ENCODE measurements at regions of chr2 and their contacts with region 1.

Region 1: GRCh38 chr2:112626604-112627059 is 19.1 kb upstream of the SLC20A1 start:
- DNase-seq: peak; percentile 89
- H3K4me3 Mint-ChIP-seq: peak overlapping the region; percentile 56
- H3K27ac Mint-ChIP-seq: peak overlapping the region; percentile 90
- H3K4me1 Mint-ChIP-seq: peaks cover 74% of the 10 kb centered on the region
- H3K27me3 Mint-ChIP-seq: no peaks in the 10 kb centered on the region

Region 2: GRCh38 chr2:112584134-112584890 is 42.3 kb before region 1 on chr2 and contains the start of gene CHCHD5:
- intact Hi-C with region 1: loop called (anchors 1 kb)
- DNase-seq: peak; percentile 98
- H3K4me3 Mint-ChIP-seq: peak within 1 kb of the TSS; percentile 93
- H3K27ac Mint-ChIP-seq: peak within 1 kb of the TSS; percentile 99
- H3K4me1 Mint-ChIP-seq: peaks cover 33% of the 10 kb centered on the region
- H3K27me3 Mint-ChIP-seq: no peaks in the 10 kb centered on the region
- total RNA-seq, gene CHCHD5: 36.4 and 37.6 TPM in 2 replicates

Region 3: DNA sequence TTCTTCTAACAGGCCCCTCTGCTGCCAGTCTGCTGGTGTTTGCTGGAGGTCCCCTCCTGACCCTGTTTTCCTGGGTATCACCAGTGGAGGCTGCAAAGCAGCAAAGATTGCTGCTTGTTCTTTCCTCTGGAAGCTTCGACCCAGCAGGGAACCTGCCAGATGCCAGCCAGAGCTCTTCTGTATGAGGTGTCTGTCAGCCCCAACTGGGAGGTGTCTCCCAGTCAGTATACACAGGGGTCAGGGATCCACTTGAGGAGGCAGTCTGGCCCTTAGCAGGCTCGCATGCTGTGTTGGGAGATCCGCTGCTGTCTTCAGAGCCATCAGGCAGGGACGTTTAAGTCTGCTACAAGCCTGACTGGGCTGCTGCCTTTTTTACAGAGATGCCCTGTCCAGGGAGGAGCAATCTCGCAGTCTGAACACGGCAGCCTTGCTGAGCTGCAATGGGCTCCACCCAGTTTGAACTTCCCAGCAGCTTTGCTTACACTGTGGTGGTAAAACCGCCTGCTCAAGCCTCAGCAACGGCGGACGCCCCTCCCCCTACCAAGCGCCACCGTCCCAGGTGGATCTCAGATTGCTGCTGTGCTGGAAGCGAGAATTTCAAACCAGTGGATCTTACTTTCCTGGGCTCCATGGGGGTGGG is 12.3 kb before region 1 on chr2:
- intact Hi-C with region 1: no loop called
- DNase-seq: no peak
- H3K4me3 Mint-ChIP-seq: no peak overlapping the region
- H3K27ac Mint-ChIP-seq: no peak overlapping the region
- H3K4me1 Mint-ChIP-seq: peaks cover 1% of the 10 kb centered on the region
- H3K27me3 Mint-ChIP-seq: peaks cover 34% of the 10 kb centered on the region

Region 4: DNA sequence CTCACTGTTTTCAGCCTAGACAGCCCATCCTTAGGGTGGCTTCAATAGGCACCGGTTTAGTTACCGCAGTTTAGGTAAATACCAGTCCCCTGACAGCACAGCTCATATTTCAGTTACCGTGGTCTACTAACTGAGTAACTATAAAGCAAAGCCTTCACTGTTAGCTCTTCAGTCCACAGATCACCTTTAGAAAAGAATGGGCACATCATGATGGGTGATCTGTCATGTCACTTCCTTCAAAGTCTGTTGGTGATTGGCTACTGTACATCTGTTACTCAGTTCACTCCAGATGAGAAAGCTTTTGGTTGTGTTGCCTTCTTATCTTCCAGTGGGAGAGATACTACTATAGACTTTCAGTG is 40.1 kb after region 1 on chr2:
- intact Hi-C with region 1: loop called (anchors 5 kb)
- DNase-seq: no peak
- H3K4me3 Mint-ChIP-seq: no peak overlapping the region
- H3K27ac Mint-ChIP-seq: peak overlapping the region; percentile 60
- H3K4me1 Mint-ChIP-seq: peaks cover 2% of the 10 kb centered on the region
- H3K27me3 Mint-ChIP-seq: no peaks in the 10 kb centered on the region

Region 5: GRCh38 chr2:112685271-112685884 is 58.7 kb after region 1 on chr2:
- intact Hi-C with region 1: no loop called
- DNase-seq: no peak
- H3K4me3 Mint-ChIP-seq: no peak overlapping the region
- H3K27ac Mint-ChIP-seq: no peak overlapping the region
- H3K4me1 Mint-ChIP-seq: peaks cover 19% of the 10 kb centered on the region
- H3K27me3 Mint-ChIP-seq: no peaks in the 10 kb centered on the region

Region 6: DNA sequence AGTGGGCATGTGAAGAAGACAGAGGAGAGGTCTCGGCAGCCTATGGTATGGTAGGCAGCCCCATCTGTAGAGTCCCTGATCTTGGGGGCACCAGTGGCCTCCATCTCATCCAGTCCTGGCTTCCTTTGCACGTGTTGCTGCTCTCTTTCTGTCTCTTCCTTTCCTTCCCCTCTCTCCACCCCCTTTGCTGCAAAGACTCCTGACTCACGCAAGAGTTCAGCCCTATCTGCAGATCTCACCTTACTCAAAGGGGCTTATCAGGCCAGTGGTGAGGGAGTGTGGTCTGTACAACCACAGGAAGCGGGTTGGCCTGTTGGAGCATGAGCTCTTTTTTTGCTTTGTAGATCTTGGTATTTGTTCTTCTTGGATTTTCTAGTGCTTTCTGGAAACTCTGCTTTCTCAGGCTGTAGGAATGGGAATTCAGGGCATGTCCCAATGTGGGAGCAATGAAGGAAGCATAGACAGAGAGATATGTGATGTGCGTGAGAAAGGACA is 79.6 kb after region 1 on chr2:
- intact Hi-C with region 1: loop called (anchors 2 kb)
- DNase-seq: peak; percentile 94
- H3K4me3 Mint-ChIP-seq: peak overlapping the region; percentile 74
- H3K27ac Mint-ChIP-seq: peak overlapping the region; percentile 69
- H3K4me1 Mint-ChIP-seq: peaks cover 45% of the 10 kb centered on the region
- H3K27me3 Mint-ChIP-seq: no peaks in the 10 kb centered on the region

Region 7: DNA sequence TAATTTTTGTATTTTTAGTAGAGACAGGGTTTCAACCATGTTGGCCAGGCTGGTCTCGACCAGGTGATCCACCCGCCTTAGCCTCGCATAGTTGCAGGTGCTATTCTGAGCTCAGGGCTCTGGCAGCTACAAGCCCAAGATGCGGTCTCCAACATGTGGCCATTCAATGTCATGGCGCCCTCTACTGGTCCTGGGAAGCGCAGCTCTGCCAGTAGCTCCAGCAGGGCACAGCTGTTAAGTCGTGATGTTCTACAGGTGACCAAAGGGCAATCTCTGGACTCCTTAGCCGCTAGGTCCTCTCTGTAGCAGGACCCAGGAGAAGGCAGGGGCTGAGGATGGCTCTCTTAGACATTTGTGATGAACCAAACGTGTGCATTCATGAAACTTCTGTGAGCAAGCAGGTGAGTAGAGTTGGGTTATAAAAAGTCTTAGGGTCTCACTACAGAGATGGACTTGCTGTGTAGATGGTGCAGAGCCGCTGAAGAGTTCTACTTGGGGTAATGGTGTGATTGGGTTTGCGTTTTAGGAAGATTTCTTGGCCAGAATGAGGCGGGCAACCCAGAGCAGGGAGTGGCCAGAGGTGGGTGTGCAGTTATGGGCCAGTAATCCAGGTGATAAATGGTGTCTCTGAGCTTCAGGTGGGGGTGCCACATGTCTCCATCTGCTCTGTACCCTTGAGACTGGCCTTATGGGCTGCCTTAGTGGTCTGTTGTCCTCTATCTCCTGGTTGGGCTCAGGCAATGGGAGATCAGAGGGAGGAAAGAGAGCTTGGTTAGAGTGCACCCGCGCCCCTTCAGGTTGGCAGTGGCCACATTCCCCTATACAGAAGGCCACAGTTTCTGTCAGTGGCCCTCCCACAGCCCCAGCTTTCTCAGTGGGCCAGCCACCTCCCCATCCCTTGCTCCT is 315.4 kb after region 1 on chr2:
- intact Hi-C with region 1: loop called (anchors 10 kb)
- DNase-seq: peak; percentile 93
- H3K4me3 Mint-ChIP-seq: no peak overlapping the region
- H3K27ac Mint-ChIP-seq: peak overlapping the region; percentile 25
- H3K4me1 Mint-ChIP-seq: peaks cover 6% of the 10 kb centered on the region
- H3K27me3 Mint-ChIP-seq: peaks cover 17% of the 10 kb centered on the region